Right ventricle myocardium superior (tissue), 1 donor: ENCODE measurements at regions of chr11 and their contacts with region 1.

Region 1: GRCh38 chr11:6389921-6390724 is at the start of gene SMPD1:
- DNase-seq: peak; percentile 97
- ATAC-seq: peak; percentile 98
- total RNA-seq, gene SMPD1: 51.6 TPM

Region 2: GRCh38 chr11:6285019-6285418 is 105.1 kb before region 1 on chr11:
- intact Hi-C with region 1: no loop called
- DNase-seq: no peak
- ATAC-seq: peak; percentile 63

Region 3: GRCh38 chr11:6420677-6421076 is 30.6 kb after region 1 on chr11:
- intact Hi-C with region 1: loop called (anchors 5 kb)
- DNase-seq: no peak
- ATAC-seq: no peak